Posterior cingulate gyrus (tissue), 11 donors: ENCODE measurements at regions of chr3 and their contacts with region 1.

Region 1: DNA sequence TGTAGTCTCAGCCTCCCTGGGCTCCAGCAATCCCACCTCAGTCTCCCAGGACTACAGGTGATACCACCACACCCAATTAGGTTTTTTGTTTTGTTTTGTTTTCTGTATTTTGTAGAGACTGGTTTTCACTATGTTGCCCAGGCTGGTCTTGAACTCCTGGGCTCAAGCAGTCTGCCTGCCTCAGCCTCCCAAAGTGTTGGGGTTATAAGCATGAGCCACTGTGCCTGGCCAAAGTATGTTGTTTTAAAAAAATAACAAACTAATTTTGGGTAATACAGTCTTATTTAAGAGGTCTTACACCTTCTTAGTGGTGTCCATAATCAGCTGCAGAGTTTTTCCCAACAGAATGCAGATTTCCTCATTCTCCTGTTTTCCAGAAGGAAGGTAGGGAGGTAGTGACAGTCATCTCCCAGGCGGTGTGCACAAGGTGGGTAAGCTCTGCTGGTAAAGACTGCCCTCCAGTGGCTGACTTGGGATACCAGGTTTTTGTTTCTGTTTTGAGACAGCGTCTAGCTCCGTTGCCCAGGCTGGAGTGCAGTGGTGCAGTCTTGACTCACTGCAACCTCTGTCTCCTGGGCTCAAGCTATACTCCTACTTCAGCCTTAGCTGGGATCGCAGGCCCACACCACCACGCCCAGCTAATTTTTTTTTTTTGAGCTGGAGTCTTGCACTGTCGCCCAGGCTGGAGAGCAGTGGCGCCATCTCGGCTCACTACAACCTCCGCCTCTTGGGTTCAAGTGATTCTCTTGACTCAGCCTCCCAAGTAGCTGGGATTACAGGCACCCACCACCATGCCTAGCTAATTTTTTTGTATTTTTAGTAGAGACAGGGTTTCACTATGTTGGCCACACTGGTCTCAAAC is 58.4 kb downstream of the MAP6D1 start:
- DNase-seq: peak; percentile 31 to 95 (median 78)

Region 2: GRCh38 chr3:183502237-183503181 is 264.5 kb before region 1 on chr3:
- intact Hi-C with region 1: loop called (anchors 2 kb)
- DNase-seq: peak in 6 of 10 donors; percentile 35 to 90 (median 47)

Region 3: DNA sequence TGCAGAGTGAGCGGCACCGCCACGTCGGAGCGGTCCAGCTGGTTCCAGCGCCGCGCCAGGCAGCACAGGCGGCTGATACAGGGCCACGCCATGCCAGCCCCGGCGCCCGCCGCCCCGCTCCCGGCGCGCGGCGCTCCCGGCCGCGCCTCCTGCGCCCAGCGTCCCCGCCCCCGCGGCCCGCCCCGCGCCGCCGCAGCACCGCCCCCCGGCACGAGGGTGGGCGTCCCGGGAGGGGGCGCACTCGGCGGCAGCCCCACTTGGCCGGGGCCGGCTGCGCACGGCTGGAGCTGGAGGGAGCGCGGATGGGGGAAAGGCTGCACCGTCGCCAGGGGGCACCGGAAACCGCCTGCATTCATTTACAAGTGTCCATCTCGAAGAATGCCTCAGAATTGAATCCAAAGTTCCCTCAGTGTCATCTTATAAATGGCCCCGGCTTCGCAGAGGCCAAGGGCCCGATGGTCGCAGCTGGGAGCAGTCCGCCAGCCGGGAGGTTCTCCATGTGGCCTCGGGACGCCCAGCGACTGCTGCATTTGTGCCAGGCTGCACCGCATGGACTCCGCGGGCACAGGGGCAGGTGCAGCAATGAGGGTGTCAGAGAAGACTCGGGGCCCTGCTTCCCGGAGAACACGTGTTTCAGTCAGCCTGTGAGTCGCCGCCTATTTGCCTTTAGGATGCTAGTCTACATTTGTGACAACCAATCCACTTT is 58.6 kb after region 1 on chr3 and contains the start of gene MAP6D1:
- intact Hi-C with region 1: no loop called
- DNase-seq: peak; percentile 63 to 97 (median 70)